PC-3 (cell line): ENCODE measurements at regions of chr17 and their contacts with region 1.

Region 1: DNA sequence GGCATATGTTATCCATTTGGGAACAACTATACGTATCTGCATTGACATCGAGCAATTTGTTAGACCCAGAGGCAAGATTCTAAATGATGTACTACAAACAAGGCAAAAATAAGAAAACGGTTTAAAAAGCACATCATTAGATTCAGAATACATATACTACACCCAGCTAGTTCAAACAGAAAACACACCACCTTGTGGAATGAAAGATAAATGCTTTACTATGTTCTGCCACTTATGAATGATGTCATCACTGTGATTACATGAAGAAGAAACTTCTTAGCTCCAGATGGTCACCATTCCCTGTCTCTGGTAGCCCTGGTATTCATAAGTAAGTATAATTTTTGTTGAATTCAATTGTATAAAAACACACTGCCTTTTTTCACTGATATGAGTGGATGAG is 7.8 kb downstream of the NACA2 start:
- DNase-seq: peak; percentile 86
- ATAC-seq: peak; percentile 66
- H3K4me3 ChIP-seq: no peak overlapping the region
- H3K27ac ChIP-seq: no peak overlapping the region
- H3K4me1 ChIP-seq: peaks cover 30% of the 10 kb centered on the region
- H3K27me3 ChIP-seq: no peaks in the 10 kb centered on the region
- CTCF ChIP-seq: peak; percentile 83

Region 2: GRCh38 chr17:61568219-61569072 is 14.8 kb before region 1 on chr17:
- CTCF ChIA-PET with region 1: interaction called, 8 read pairs
- POLR2A ChIA-PET with region 1: interaction called, 15 read pairs
- intact Hi-C with region 1: loop called (anchors 1 kb)
- DNase-seq: peak; percentile 99
- ATAC-seq: peak; percentile 91
- H3K4me3 ChIP-seq: peak overlapping the region; percentile 56
- H3K27ac ChIP-seq: peak overlapping the region; percentile 97
- H3K4me1 ChIP-seq: peaks cover 36% of the 10 kb centered on the region
- H3K27me3 ChIP-seq: no peaks in the 10 kb centered on the region
- CTCF ChIP-seq: no peak

Region 3: DNA sequence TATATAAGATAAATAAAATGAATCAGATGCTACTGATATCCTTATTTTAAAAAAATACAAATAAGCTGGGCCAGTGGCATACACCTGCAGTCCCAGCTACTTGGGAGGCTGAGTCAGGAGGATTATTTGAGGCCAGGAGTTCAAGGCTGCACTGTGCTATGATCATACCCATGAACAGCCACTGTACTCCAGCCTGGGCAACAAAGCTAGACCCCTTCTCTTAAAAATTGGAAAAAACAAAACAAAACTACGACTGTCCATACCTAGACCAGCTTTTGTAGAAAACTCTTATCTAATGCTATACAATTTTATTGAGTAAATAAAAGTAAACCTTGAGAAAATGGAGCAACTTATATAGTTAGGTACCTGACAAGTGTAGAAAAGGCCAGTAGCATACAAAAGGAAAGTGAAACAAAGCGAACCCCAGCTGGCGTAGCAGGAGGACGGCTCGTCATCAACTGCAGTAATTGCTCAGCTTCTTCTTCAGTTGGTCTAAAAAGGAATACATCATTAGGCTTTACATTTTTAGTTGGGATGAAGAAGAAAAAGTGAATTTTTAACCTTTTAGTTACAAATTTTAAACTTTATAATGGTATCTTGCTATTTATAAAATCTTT is 321.0 kb after region 1 on chr17:
- CTCF ChIA-PET with region 1: no interaction called
- POLR2A ChIA-PET with region 1: no interaction called
- intact Hi-C with region 1: no loop called
- DNase-seq: no peak
- ATAC-seq: no peak
- H3K4me3 ChIP-seq: no peak overlapping the region
- H3K27ac ChIP-seq: no peak overlapping the region
- H3K4me1 ChIP-seq: no peaks in the 10 kb centered on the region
- H3K27me3 ChIP-seq: no peaks in the 10 kb centered on the region
- CTCF ChIP-seq: no peak

Region 4: DNA sequence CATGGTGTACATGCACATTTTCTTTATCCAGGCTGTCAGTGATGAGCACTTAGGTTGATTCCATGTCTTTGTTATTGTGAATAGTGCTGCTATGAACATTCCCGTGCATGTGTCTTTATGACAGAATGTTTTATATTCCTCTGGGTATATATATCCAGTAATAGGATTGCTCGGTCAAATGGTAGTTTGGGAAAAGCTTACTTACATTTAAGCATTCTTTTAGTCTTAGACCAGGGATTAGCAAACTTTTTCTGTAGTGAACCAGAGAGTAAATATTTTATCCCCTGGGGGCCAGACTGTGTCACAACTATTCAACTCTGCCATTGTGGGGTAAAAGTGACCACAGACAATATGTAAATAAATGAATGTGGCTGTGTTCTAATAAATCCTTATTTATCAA is 441.7 kb after region 1 on chr17:
- CTCF ChIA-PET with region 1: no interaction called
- POLR2A ChIA-PET with region 1: interaction called, 12 read pairs
- intact Hi-C with region 1: no loop called
- DNase-seq: peak; percentile 32
- ATAC-seq: peak; percentile 38; the same call in 1 of the 2 replicates
- H3K4me3 ChIP-seq: no peak overlapping the region
- H3K27ac ChIP-seq: no peak overlapping the region
- H3K4me1 ChIP-seq: no peaks in the 10 kb centered on the region
- H3K27me3 ChIP-seq: no peaks in the 10 kb centered on the region
- CTCF ChIP-seq: no peak